ENCODE measurements at regions of chr12 and their contacts with region 1.

Region 1: DNA sequence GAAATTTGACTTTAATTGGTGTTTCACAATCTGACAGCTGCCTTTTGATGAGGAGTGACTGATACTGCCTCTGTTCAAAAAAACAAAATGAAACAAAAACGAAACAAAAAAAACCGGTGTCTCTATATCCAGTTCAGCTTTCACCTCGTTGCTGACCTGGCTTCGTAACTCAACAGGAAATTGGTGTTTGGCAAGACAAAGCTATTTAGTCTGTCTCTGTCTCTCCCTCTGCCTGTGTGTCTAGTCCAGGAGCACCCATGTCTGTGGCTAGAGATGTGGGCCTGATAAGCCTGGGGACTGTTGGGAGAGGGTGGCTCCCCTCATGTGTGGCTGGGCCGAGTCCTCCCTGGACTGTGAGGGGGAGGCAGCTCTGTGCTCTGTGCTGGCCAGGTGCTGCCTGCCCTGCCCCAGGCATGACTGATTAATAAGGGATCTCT is 11.3 kb downstream of the CACNA1C start:
- DNase-seq: no peak

Region 2: GRCh38 chr12:2113119-2113912 is 49.2 kb after region 1 on chr12:
- intact Hi-C with region 1: no loop called
- DNase-seq: peak; percentile 72

Region 3: GRCh38 chr12:2267703-2268501 is 203.8 kb after region 1 on chr12:
- intact Hi-C with region 1: loop called (anchors 5 to 10 kb)
- DNase-seq: peak; percentile 84